Posterior vena cava (tissue), 2 donors: ENCODE measurements at regions of chr10 and their contacts with region 1.

Region 1: DNA sequence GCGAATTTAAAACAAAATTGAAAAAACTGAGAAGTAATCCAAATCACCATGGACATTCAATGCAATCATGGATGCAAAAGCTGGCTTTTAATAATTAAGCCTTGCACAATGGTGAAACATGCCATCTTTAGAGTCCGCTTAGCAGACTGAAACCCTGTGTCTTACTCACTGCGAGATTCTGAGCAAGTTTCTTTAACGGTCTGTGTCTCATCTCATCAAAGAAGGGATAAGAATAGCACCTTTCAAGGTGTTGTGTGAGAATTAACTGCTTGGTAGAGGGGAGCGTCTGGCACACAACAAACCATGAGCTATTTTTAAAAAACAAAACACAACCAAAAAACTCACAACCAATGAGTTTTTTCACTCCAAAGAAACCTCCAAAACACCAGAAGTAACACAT is 21.4 kb downstream of the ACBD7 start:
- DNase-seq: no peak

Region 2: DNA sequence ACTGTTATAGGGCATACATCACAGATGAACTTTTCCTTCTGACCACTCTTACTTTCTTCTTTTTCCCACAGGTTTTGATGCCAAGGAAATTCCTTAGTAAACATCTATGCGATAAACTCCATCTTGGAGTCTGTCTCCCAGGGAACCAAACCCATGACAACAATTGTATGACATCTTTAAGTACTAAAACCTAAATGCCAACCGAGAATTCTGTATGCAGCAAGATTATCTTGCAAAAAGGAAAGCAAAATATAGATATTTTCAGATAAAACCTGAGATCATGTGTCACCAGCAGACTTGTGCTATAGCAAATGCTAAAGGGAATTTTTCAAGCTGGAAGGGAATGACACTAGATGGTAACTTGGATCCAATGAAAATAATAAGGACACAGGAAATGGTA is 1516.4 kb before region 1 on chr10:
- intact Hi-C with region 1: no loop called
- DNase-seq: no peak

Region 3: GRCh38 chr10:15046626-15047025 is 20.5 kb before region 1 on chr10:
- intact Hi-C with region 1: loop called in 1 of 2 experiments (anchors 1 kb)
- DNase-seq: no peak

Region 4: GRCh38 chr10:15300697-15301096 is 233.5 kb after region 1 on chr10:
- intact Hi-C with region 1: no loop called
- DNase-seq: no peak